ENCODE measurements at regions of chr9 and their contacts with region 1.

Region 1: DNA sequence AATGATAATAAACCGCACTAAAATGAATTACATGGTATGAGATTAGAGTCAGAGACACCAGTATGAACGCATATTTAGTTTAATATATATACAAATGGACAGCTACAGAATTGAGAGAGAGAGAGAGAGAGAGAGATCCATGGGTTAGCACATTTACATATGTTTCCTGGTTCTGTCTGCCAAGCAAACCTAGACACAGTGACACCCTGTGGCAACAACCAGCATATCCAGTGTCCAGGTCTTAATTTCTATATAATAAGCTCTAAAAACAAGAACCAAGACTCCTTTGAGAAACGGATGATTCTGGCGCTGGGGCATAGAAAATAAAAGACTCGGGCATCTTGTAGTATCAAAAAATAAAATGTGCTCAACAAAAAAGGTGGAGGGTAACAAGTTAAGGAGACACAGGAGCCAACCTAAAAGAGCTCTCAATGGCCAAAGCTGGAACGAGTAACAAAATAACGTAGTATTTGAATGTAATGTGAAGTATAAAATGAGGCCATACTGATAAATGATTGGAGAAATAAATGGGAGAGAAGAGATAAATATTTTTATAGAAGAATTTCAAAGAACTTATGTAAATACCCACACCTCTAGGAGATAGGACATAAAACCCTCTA is 84.5 kb downstream of the RFX3 start:
- DNase-seq: peak; percentile 37
- H3K4me3 ChIP-seq: no peak overlapping the region
- H3K27ac ChIP-seq: no peak overlapping the region
- H3K27me3 ChIP-seq: no peaks in the 10 kb centered on the region
- CTCF ChIP-seq: peak; percentile 77

Region 2: GRCh38 chr9:3224931-3225330 is 216.4 kb before region 1 on chr9:
- CTCF ChIA-PET with region 1: interaction called, 12 read pairs
- POLR2A ChIA-PET with region 1: no interaction called
- DNase-seq: no peak
- H3K4me3 ChIP-seq: no peak overlapping the region
- H3K27ac ChIP-seq: no peak overlapping the region
- H3K27me3 ChIP-seq: no peaks in the 10 kb centered on the region
- CTCF ChIP-seq: no peak

Region 3: DNA sequence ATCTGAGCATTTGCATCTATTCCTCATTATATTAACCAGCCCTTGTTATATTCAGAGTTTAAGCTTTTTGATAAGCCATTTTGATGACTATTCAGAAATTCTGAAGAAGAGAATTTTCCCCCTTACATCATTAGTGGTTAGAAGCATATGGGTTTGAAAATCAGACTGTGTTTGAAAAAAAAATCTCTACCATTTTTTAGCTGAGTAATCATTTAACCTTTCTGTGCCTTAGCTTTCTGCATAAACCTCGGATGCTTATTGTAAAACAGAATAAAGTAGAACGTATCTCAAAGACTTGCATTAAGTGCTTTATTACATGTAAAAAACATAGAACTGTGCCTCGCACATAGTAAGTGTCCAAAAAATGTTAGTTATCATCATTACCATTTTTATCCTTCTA is 194.1 kb before region 1 on chr9:
- CTCF ChIA-PET with region 1: interaction called, 166 read pairs
- POLR2A ChIA-PET with region 1: no interaction called
- DNase-seq: no peak
- H3K4me3 ChIP-seq: no peak overlapping the region
- H3K27ac ChIP-seq: no peak overlapping the region
- H3K27me3 ChIP-seq: no peaks in the 10 kb centered on the region
- CTCF ChIP-seq: no peak

Region 4: GRCh38 chr9:3413984-3414383 is 27.3 kb before region 1 on chr9:
- CTCF ChIA-PET with region 1: interaction called, 36 read pairs
- POLR2A ChIA-PET with region 1: no interaction called
- DNase-seq: no peak
- H3K4me3 ChIP-seq: no peak overlapping the region
- H3K27ac ChIP-seq: no peak overlapping the region
- H3K27me3 ChIP-seq: no peaks in the 10 kb centered on the region
- CTCF ChIP-seq: no peak

Region 5: GRCh38 chr9:3451956-3452355 is 10.6 kb after region 1 on chr9:
- CTCF ChIA-PET with region 1: interaction called, 36 read pairs
- POLR2A ChIA-PET with region 1: no interaction called
- DNase-seq: no peak
- H3K4me3 ChIP-seq: no peak overlapping the region
- H3K27ac ChIP-seq: no peak overlapping the region
- H3K27me3 ChIP-seq: no peaks in the 10 kb centered on the region
- CTCF ChIP-seq: no peak

Region 6: GRCh38 chr9:3478549-3478953 is 37.2 kb after region 1 on chr9:
- CTCF ChIA-PET with region 1: interaction called, 10 read pairs
- POLR2A ChIA-PET with region 1: no interaction called
- DNase-seq: no peak
- H3K4me3 ChIP-seq: no peak overlapping the region
- H3K27ac ChIP-seq: no peak overlapping the region
- H3K27me3 ChIP-seq: no peaks in the 10 kb centered on the region
- CTCF ChIP-seq: no peak